ENCODE measurements at regions of chr6 and their contacts with region 1.

Region 1: GRCh38 chr6:32868257-32868788 is 14.3 kb downstream of the PSMB9 start:
- DNase-seq: peak; percentile 88
- H3K4me3 Mint-ChIP-seq: no peak overlapping the region
- H3K27ac Mint-ChIP-seq: no peak overlapping the region
- H3K4me1 Mint-ChIP-seq: peaks cover 35% of the 10 kb centered on the region
- H3K27me3 Mint-ChIP-seq: peaks cover 7% of the 10 kb centered on the region

Region 2: GRCh38 chr6:32761072-32761471 is 107.3 kb before region 1 on chr6:
- CTCF ChIA-PET with region 1: no interaction called
- POLR2A ChIA-PET with region 1: no interaction called
- DNase-seq: no peak
- H3K4me3 Mint-ChIP-seq: no peak overlapping the region
- H3K27ac Mint-ChIP-seq: no peak overlapping the region
- H3K4me1 Mint-ChIP-seq: no peaks in the 10 kb centered on the region
- H3K27me3 Mint-ChIP-seq: peaks cover 46% of the 10 kb centered on the region

Region 3: DNA sequence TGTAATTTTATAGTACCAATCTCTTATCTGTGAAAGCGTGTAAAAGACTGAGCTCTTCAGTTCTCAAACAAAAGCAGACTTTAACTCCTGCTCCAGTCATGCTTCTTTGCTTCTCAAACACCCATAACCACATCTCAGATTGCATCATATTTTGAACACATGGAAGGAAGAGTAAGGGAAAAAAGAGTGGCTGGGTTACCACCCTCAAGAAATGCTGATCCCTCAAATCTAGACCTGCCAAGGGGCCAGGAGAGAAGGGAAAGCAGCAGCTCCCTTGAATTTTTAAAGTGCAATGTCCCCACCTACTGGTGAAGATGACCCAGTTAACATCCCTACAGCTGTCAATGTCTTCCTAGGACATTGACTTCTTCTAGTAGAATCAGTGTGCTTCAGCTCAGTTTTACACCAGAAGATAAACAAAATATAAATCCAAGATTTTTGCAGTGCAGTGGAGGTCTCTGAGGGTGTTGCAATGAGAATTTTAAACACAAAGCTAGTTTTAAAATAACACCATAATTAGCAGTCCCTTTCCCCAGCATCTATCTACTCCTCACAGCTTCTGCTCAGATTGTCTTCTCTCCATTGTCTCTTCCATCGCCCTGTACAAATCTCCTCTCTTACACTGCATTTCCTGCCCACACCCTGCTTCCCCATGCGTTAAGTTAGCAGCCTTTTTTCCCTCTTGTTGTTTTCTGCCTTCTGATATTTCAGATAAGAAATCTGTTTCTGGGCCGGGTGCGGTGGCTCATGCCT is 82.4 kb before region 1 on chr6:
- CTCF ChIA-PET with region 1: interaction called, 11 read pairs
- POLR2A ChIA-PET with region 1: no interaction called
- DNase-seq: peak; percentile 43
- H3K4me3 Mint-ChIP-seq: no peak overlapping the region
- H3K27ac Mint-ChIP-seq: no peak overlapping the region
- H3K4me1 Mint-ChIP-seq: peaks cover 3% of the 10 kb centered on the region
- H3K27me3 Mint-ChIP-seq: peaks cover 63% of the 10 kb centered on the region

Region 4: DNA sequence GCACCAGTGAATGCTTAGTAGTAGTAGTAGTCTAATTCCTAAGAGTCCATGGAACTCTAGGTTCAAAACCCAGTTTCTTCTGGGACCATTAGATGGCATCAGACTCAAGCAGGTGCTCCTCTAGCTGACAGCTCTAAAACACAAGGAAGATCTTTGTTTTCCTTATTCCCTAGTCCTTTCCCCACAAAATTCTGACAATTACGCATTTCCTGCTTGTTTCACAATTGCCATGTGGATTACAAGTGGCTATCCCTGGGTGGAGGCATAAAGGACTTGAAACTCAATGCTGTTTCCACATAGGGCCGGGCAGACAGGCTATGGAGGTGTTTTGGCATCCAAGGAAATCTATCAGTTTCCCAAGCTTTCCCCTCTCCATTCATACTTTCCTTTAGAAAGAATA is 42.4 kb before region 1 on chr6:
- CTCF ChIA-PET with region 1: interaction called, 18 read pairs
- POLR2A ChIA-PET with region 1: interaction called, 5 read pairs
- DNase-seq: no peak
- H3K4me3 Mint-ChIP-seq: no peak overlapping the region
- H3K27ac Mint-ChIP-seq: no peak overlapping the region
- H3K4me1 Mint-ChIP-seq: peaks cover 25% of the 10 kb centered on the region
- H3K27me3 Mint-ChIP-seq: no peaks in the 10 kb centered on the region

Region 5: DNA sequence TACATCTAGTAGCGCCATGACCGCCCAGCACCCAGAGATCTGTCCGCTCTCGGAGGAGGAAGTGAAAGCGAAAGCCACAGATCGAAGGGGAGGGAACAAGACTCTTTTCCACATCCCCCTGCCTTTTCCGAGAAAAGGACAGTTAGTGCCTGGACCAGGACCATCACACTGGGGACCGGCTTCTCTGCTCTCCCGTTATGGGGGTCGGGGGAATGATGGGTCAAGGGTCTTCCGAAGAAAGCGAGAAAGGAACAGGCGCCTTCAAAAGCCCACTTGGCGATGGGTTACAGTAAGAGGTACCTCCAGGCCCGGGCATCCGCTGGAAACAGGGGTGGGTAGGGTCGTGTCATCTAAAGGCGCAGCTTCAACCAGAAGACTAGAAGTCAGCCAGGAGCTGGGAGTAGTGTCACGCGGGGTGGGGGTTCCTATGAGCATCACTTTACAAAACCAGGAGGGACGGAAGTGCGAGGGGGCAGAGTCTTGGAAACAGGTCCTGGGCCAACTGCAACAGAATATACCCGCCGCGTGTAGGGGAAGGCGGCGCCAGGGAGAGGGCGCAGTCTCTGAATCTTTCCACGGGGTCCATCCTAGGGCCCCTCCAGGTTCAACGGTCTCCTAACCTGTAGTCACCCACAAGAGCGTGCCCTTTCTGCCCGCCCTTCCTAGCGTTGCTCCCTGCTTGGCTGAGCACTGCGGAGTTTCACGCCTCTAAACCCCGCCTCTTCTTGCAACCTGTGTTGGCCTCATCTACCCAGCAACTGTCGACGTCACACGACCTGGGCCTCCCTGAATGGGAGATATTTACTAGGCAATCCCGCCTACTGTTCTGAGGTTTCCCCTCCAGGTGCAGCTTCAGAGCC is 24.1 kb before region 1 on chr6 and contains the start of gene PSMB8:
- CTCF ChIA-PET with region 1: interaction called, 234 read pairs
- POLR2A ChIA-PET with region 1: interaction called, 125 read pairs
- DNase-seq: peak; percentile 99
- H3K4me3 Mint-ChIP-seq: peak within 1 kb of the TSS; percentile 97
- H3K27ac Mint-ChIP-seq: peak within 1 kb of the TSS; percentile 99
- H3K4me1 Mint-ChIP-seq: peaks cover 69% of the 10 kb centered on the region
- H3K27me3 Mint-ChIP-seq: no peaks in the 10 kb centered on the region
- total RNA-seq, gene PSMB8: 389 to 401 TPM

Region 6: DNA sequence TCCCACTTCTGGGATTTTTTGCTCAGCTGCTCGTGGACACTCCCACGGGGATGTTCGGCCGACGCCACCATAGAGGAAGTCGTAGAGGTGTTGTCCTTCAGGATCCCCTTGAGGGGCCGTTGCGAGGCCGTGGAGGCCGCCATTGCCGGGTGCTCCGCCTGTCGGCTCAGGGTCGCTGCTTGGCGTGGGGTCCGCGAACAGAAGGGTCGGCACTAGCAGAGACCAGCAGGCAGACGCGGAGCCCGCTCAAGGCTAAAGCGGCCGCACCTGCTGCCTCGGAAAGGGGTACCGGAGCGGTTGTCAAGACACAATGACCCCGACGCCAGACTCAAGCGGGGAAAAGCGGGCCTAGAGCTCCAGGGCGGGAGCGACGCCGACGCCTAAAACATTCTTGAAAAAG is 11.4 kb after region 1 on chr6:
- CTCF ChIA-PET with region 1: interaction called, 11 read pairs
- POLR2A ChIA-PET with region 1: no interaction called
- DNase-seq: no peak
- H3K4me3 Mint-ChIP-seq: no peak overlapping the region
- H3K27ac Mint-ChIP-seq: no peak overlapping the region
- H3K4me1 Mint-ChIP-seq: peaks cover 2% of the 10 kb centered on the region
- H3K27me3 Mint-ChIP-seq: no peaks in the 10 kb centered on the region

Region 7: GRCh38 chr6:32933636-32934085 is 65.3 kb after region 1 on chr6:
- CTCF ChIA-PET with region 1: interaction called, 11 read pairs
- POLR2A ChIA-PET with region 1: no interaction called
- DNase-seq: peak; percentile 79
- H3K4me3 Mint-ChIP-seq: no peak overlapping the region
- H3K27ac Mint-ChIP-seq: no peak overlapping the region
- H3K4me1 Mint-ChIP-seq: peaks cover 16% of the 10 kb centered on the region
- H3K27me3 Mint-ChIP-seq: peaks cover 2% of the 10 kb centered on the region

Measured in activated CD4-positive, alpha-beta memory T cell treated with anti-CD3 and anti-CD28 coated beads, Interleukin-2, amount 10 ng/mL, durations not matched to agents 7 days and 5 days (primary cell).